Cardiac septum (tissue), 1 donor: ENCODE measurements at regions of chr14 and their contacts with region 1.

Region 1: DNA sequence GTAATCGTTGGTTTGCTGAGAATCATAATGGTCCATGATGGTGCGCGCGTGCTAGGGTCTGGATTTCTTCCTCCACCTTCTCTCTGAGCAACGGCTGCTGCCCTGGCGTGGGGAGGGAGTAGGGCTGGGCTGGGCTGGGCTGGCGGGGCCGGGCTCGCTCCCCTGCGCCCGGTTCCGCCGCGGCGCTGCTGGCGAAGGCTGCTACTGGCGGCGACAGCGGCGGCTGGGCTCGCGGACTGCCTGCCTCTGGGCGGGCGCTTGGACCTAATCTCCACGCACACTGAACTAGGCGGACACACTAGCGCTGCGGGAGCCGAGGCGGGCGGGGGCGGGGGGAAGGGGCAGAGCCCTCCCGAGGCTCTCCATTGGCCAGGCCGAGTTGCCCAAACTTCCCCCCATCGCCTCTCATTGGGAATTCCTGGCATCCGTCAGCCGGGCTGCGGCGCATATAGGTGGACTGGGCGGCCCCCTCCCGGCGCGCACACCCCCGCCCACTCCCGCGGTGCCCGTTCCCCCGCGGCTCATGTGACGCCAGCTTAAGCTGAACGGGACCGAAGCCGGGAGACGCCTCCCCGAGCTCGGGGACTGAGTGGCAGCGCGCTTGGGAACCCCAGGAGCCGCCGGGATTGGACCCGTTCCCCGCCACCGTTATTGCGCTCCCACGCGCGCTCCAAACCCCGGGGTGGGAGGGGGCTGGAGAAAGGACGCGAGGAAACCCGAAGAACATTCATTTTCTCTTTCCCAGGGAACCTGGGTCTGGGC is at the start of gene ACTN1:
- DNase-seq: peak; percentile 97
- total RNA-seq, gene ACTN1: 346 TPM

Region 2: DNA sequence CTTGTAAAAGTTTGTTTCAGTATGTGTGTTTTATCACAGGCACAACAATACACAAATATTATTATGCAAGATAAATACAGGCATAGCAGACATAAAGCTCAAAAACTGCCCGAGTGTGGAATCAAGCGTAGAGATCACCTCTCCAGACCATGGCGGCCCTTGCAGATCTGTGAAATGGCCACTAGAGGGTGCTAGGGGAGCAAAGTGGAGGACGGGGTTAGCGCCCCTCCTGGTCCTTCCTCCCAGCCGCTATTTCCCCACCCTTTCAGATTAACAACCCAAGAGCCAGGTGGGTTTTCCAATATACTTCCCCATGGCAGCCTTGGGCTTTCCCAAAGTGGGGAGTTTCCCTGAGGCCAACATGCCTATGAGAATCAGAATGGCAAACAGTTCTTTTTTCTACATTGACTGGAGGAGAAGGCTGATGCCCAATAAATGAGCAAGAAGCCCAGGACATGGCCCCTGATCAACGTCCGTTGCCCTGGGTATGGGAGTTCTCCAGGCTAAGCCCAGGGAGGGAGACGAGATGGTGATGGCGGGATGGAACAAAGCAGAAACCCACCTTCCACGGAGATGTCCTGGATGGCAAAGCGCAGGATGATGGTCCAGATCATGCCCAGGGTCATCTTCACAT is 67.5 kb before region 1 on chr14:
- intact Hi-C with region 1: loop called (anchors 2 kb)
- DNase-seq: peak; percentile 86

Region 3: GRCh38 chr14:68926236-68926635 is 53.0 kb before region 1 on chr14:
- intact Hi-C with region 1: no loop called
- DNase-seq: no peak

Region 4: DNA sequence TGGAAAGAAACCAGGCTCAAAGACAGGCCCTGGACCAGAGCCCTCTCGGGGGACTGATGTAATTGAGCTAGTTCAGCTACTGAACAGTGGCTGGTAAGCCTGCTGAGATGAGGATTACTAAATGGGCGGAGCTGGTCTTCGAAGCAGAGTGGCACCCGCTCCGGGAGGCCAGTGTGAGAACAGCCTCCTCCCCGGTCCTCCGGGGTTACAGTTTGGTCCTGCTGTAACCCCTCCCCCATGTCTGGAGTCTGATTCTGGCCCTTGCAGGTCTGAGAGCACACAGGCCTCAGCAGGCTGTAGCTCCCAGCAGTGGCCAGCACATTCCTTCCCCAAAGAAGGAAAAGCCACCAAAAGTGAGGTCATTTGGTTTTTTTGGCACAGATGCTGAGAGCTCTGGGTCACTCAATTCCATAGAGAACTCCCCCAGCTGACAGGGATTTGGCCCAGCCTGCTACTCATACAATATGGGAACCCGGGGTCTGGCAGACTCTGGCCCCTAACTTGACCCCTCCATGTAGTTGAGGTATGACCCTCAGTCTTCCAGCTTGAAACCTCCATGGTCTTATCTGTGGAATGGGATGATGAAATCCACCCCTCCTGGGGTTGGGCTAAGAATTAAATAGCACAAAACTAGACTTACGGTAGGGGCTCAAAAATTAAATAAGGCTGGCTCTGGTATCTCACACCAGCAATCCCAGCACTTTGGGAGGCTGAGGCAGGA is 39.1 kb before region 1 on chr14:
- intact Hi-C with region 1: loop called (anchors 1 kb)
- DNase-seq: peak; percentile 88

Region 5: DNA sequence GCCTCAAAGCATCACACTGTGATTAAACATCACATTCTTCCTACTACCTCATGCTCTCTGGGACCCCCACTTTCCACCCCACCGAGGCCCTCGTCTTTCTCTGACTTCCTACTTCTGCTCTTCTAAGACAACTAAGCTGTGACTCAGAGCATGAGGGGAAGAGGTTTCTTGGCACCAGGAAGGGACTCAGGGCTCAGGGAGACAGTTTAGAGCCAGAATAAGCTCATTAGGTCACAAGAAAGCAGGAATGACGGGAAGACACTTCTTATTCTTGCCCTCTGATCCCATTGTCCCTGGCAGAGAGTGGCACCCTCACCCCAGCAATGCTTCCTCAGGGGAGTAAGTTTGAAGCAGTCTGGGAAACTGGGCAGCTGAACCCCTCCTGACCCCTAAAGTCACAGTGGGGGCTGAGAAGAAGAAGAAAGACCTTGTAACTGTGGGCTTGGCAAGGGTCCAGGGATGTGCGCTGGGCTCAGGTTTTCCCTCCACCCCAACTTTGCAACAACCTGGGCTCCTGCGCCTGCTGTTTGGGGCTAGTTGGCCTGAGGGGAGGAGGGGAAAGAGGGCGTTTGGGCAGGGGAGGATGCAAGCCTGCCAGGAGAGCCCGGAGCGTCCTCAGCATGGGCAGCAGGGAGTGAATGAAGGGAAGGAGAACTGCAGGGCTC is 64.5 kb after region 1 on chr14:
- intact Hi-C with region 1: loop called (anchors 5 kb)
- DNase-seq: no peak

Region 6: GRCh38 chr14:69090187-69090789 is 111.1 kb after region 1 on chr14:
- intact Hi-C with region 1: loop called (anchors 5 kb)
- DNase-seq: no peak